Panc1 (cell line): ENCODE measurements at regions of chr1 and their contacts with region 1.

Region 1: DNA sequence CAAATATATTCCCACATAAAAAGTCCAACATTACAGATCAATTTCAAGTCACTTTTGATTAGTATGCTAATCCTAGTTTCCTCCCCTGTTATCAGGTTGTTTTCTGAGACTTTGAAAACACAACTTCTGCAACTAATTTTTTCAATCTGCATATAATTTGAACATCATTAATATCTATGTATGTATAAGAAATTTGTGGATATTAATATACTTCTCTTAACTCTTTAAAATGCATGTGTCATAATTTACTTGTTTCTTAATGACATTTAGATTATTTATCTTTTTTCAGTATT is 48.6 kb downstream of the EXO1 start:
- DNase-seq: no peak
- ATAC-seq: no peak
- H3K4me3 ChIP-seq: no peak overlapping the region
- H3K27ac ChIP-seq: no peak overlapping the region
- H3K4me1 ChIP-seq: no peaks in the 10 kb centered on the region
- H3K27me3 ChIP-seq: no peaks in the 10 kb centered on the region
- CTCF ChIP-seq: peak; percentile 42

Region 2: DNA sequence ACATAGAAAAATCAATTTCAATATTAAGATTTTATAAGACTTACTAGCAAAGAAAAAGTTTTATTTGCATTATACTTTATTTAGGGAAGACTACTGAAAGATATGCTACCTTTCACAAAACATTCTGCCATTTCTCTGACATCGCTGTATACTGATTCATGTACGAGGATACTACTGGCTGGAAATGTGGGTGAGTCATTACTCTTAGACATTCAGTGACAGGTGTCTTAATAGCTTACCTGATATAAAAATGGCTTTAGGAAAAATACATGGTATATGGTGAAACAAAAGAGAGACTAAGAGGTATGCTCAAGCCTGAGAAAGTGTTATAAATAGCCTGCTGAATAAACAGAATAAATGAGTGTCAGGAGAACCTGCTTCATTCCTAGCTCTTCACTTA is 121.6 kb before region 1 on chr1:
- CTCF ChIA-PET with region 1: no interaction called
- POLR2A ChIA-PET with region 1: no interaction called
- in situ Hi-C with region 1: no loop called
- intact Hi-C with region 1: no loop called
- DNase-seq: no peak
- ATAC-seq: no peak
- H3K4me3 ChIP-seq: no peak overlapping the region
- H3K27ac ChIP-seq: no peak overlapping the region
- H3K4me1 ChIP-seq: no peaks in the 10 kb centered on the region
- H3K27me3 ChIP-seq: no peaks in the 10 kb centered on the region
- CTCF ChIP-seq: no peak

Region 3: DNA sequence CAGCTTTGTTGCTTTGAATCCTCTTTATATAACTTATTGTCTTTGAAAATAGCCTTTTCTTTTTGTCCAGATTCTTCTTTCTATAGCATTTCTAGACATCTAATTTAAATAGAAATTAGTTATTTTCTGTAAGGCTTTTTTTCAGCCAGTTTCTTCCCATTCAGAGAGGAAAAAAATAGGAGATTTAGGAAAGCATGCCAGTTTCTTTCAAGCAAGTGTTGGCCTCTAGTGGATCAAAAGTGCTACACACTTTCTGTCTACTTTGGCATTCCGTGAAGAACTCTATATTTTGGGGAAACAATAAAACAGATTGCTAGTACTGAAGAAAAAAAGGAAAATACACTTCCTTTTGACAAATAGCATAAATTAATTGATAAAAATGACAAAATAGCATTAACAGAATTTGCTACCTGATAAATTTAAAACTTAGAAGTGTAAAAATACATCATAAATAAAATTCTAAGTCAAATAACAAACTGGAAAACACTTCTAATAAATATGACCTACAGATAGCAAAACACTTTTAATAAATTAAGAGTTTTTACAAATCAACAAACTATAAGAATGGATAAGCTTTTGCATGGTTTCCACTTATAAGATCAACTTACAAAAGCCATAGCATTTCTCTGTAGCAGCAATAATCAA is 61.8 kb before region 1 on chr1:
- CTCF ChIA-PET with region 1: no interaction called
- POLR2A ChIA-PET with region 1: no interaction called
- in situ Hi-C with region 1: no loop called
- intact Hi-C with region 1: no loop called
- DNase-seq: peak; percentile 18
- ATAC-seq: 0 out of 2 replicates have a peak, but pooled peaks have one; percentile 72
- H3K4me3 ChIP-seq: no peak overlapping the region
- H3K27ac ChIP-seq: no peak overlapping the region
- H3K4me1 ChIP-seq: no peaks in the 10 kb centered on the region
- H3K27me3 ChIP-seq: no peaks in the 10 kb centered on the region
- CTCF ChIP-seq: peak; percentile 76; the same call in 1 of the 2 replicates

Region 4: GRCh38 chr1:241947354-241947753 is 50.7 kb after region 1 on chr1:
- CTCF ChIA-PET with region 1: no interaction called
- POLR2A ChIA-PET with region 1: no interaction called
- in situ Hi-C with region 1: no loop called
- intact Hi-C with region 1: no loop called
- DNase-seq: no peak
- ATAC-seq: no peak
- H3K4me3 ChIP-seq: no peak overlapping the region
- H3K27ac ChIP-seq: no peak overlapping the region
- H3K4me1 ChIP-seq: peaks cover 5% of the 10 kb centered on the region
- H3K27me3 ChIP-seq: no peaks in the 10 kb centered on the region
- CTCF ChIP-seq: no peak

Region 5: DNA sequence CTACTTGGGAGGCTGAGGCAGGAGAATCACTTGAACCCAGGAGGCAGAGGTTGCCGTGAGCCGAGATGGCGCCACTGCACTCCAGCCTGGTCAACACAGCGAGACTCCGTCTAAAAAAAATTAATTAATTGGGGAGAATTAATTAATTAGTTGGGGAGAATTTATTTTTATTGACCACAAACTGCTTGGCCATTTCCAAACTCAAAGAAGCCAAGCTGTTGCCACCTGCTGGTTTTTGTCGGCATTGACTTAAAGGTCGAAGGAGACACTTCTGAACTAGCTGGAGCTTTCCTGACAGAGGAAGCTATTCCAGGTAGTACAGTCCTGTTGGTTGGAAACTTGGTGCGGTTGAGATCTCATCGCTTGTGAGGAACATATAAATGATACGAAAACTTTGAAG is 89.2 kb after region 1 on chr1:
- CTCF ChIA-PET with region 1: interaction called, 10 read pairs
- POLR2A ChIA-PET with region 1: no interaction called
- in situ Hi-C with region 1: no loop called
- intact Hi-C with region 1: loop called (anchors 2 kb)
- DNase-seq: no peak
- ATAC-seq: peak; percentile 77
- H3K4me3 ChIP-seq: no peak overlapping the region
- H3K27ac ChIP-seq: no peak overlapping the region
- H3K4me1 ChIP-seq: no peaks in the 10 kb centered on the region; the same call in 1 of the 2 replicates
- H3K27me3 ChIP-seq: no peaks in the 10 kb centered on the region
- CTCF ChIP-seq: peak; percentile 82

Region 6: GRCh38 chr1:241998412-241998921 is 101.9 kb after region 1 on chr1:
- CTCF ChIA-PET with region 1: interaction called, 3 read pairs
- POLR2A ChIA-PET with region 1: interaction called, 3 read pairs
- in situ Hi-C with region 1: no loop called
- intact Hi-C with region 1: loop called (anchors 1 kb)
- DNase-seq: peak; percentile 72
- ATAC-seq: peak; percentile 96
- H3K4me3 ChIP-seq: peak overlapping the region; percentile 40 to 74
- H3K27ac ChIP-seq: peak overlapping the region; percentile 55
- H3K4me1 ChIP-seq: peaks cover 6% of the 10 kb centered on the region; the same call in 1 of the 2 replicates
- H3K27me3 ChIP-seq: no peaks in the 10 kb centered on the region
- CTCF ChIP-seq: peak; percentile 98

Region 7: DNA sequence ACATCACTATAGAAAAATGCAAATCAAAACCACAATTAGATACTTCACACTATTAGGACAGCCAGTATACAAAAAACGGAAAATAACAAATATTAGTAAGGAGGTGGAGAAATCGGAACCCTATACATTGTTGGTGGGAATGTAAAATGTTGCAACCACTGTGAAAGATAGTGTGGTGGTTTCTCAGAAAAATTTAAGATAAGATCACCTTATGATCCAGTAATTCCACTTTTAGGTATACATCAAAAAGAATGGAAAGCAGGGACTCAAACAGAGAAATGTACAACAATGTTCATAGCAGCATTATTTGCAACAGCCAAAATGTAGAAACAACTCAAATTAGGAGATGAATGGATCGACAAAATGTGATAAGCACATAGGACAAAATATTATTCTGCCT is 481.2 kb after region 1 on chr1:
- CTCF ChIA-PET with region 1: no interaction called
- POLR2A ChIA-PET with region 1: no interaction called
- in situ Hi-C with region 1: no loop called
- intact Hi-C with region 1: no loop called
- DNase-seq: no peak
- ATAC-seq: no peak
- H3K4me3 ChIP-seq: no peak overlapping the region
- H3K27ac ChIP-seq: no peak overlapping the region
- H3K4me1 ChIP-seq: no peaks in the 10 kb centered on the region
- H3K27me3 ChIP-seq: no peaks in the 10 kb centered on the region
- CTCF ChIP-seq: no peak